ENCODE measurements at regions of chr3 and their contacts with region 1.

Region 1: GRCh38 chr3:138174421-138175122 is at the start of gene DBR1:
- DNase-seq: peak; percentile 79
- H3K4me3 ChIP-seq: peak within 1 kb of the TSS; percentile 80 to 98 (median 81)
- H3K27ac ChIP-seq: peak within 1 kb of the TSS; percentile 56
- H3K4me1 ChIP-seq: peaks cover 3% of the 10 kb centered on the region
- H3K27me3 ChIP-seq: no peaks in the 10 kb centered on the region
- CTCF ChIP-seq: no peak
- total RNA-seq, gene DBR1: 12.5 to 16.7 TPM

Region 2: DNA sequence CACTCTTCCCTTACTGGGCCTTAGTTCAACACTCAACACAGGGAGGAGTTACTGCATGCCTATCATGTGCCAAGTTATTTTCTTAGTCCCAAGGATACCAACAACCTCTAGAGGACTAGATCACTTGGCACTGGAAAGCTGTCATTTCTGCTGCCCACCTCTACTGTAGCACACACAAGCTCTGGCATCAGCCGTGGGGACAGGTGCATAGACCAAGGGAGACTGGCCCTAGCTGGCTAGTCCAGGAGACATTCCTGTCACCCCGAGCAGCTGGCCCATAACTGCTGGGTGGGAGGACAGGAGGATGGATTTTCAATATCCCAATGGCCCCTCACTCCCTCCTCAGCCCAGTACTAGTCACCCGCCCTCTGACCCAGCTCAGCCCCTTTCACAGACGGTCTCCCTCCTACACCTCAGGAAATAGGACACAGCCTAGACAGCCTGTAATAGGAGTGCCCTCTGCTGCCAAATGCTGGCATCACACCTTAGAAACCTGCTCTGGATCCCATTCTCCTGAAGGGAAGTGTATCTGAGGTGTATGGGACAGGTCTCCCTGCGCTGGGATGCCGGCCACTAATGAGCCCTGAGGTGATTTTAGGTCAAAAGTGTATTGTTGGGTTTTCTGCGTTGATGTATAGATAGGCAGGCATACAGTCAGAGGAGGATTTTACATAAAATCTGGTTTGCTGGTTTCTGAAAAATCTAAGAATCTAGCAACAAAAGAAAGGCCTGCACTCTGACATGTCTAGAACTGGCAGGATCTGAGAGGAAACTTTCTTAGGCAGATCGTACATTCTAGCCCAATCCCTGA is 55.8 kb before region 1 on chr3:
- CTCF ChIA-PET with region 1: no interaction called
- dilution Hi-C with region 1: no loop called
- in situ Hi-C with region 1: no loop called
- intact Hi-C with region 1: loop called (anchors 2 kb)
- DNase-seq: peak; percentile 67
- H3K4me3 ChIP-seq: no peak overlapping the region
- H3K27ac ChIP-seq: no peak overlapping the region
- H3K4me1 ChIP-seq: peaks cover 8% of the 10 kb centered on the region
- H3K27me3 ChIP-seq: no peaks in the 10 kb centered on the region
- CTCF ChIP-seq: peak; percentile 89 to 95